ENCODE measurements at regions of chr11 and their contacts with region 1.

Region 1: GRCh38 chr11:10436224-10436623 is 18.8 kb upstream of the AMPD3 start:
- DNase-seq: no peak
- ATAC-seq: no peak
- H3K4me3 ChIP-seq: no peak overlapping the region
- H3K27ac ChIP-seq: peak overlapping the region in 1 of 10 donors; percentile 81
- H3K4me1 ChIP-seq: peaks cover 0 to 22% (median 0%) of the 10 kb centered on the region in 9 donors
- H3K27me3 ChIP-seq: peaks cover 0 to 2% (median 0%) of the 10 kb centered on the region in 7 donors
- CTCF ChIP-seq: no peak

Region 2: GRCh38 chr11:10460611-10461275 is 24.5 kb after region 1 on chr11:
- intact Hi-C with region 1: loop called in 1 of 10 experiments (anchors 2 kb)
- DNase-seq: no peak
- ATAC-seq: no peak
- H3K4me3 ChIP-seq: no peak overlapping the region
- H3K27ac ChIP-seq: peak overlapping the region in 1 of 10 donors; percentile 33
- H3K4me1 ChIP-seq: peaks cover 0 to 49% (median 5%) of the 10 kb centered on the region in 9 donors
- H3K27me3 ChIP-seq: peaks cover 0 to 5% (median 0%) of the 10 kb centered on the region in 7 donors
- CTCF ChIP-seq: no peak

Region 3: GRCh38 chr11:10514210-10514609 is 78.0 kb after region 1 on chr11:
- intact Hi-C with region 1: no loop called
- DNase-seq: no peak
- ATAC-seq: no peak
- H3K4me3 ChIP-seq: no peak overlapping the region
- H3K27ac ChIP-seq: no peak overlapping the region
- H3K4me1 ChIP-seq: peaks cover 0 to 12% (median 7%) of the 10 kb centered on the region in 9 donors
- H3K27me3 ChIP-seq: no peaks in the 10 kb centered on the region
- CTCF ChIP-seq: peak; percentile 13 to 56 (median 44)